Activated CD8-positive, alpha-beta T cell treated with anti-CD3 and anti-CD28 coated beads for 36 hours (primary cell): ENCODE measurements at regions of chr10 and their contacts with region 1.

Region 1: DNA sequence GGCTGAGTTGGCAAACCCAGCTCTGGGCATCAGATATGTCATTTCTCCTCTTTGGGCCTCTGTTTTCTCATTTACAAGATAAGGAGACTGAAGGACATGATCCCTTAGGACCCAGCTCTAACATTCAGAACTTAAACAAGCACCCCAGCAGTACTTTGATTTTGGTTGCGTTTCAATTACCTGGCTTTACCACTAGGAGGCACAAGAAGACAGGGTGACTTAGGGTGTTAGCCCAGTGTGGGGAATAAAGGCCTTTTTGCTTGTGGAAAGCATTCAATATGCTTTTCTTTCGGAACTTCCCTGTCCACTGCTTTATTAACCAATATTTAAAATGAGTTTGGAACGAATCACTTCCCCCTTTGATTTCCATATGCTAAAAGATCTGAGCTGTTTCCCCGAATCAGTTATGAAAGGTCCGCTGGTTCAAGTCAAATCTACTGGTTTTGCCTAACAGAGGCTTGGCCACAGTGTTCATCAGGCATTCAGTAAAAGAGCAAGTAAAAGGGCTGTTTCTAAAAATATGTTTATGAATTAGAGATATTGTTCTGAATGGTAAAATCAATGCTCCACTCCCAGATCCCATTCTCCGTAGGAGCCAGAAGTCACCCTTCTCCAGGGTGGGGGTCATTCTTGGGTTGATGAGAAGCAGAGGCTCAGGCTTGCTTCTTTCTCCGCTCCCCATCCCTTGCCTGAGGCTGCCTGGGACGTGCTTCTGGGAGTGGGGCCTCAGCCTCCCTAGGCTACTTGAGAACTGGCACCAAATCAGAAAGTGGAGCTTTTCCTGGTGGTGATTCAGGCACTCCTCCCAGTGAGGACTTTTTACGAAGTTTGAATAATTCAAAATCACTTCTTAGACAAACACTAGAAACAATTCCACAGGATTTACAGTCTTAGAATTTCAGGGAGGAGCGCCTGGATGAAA is 105.5 kb downstream of the MYOF start:
- DNase-seq: peak; percentile 39
- ATAC-seq: peak; percentile 48
- H3K4me3 Mint-ChIP-seq: no peak overlapping the region
- H3K27ac Mint-ChIP-seq: peak overlapping the region; percentile 40
- H3K4me1 Mint-ChIP-seq: peaks cover 35% of the 10 kb centered on the region
- H3K27me3 Mint-ChIP-seq: peaks cover 4% of the 10 kb centered on the region
- CTCF ChIP-seq: peak; percentile 90

Region 2: DNA sequence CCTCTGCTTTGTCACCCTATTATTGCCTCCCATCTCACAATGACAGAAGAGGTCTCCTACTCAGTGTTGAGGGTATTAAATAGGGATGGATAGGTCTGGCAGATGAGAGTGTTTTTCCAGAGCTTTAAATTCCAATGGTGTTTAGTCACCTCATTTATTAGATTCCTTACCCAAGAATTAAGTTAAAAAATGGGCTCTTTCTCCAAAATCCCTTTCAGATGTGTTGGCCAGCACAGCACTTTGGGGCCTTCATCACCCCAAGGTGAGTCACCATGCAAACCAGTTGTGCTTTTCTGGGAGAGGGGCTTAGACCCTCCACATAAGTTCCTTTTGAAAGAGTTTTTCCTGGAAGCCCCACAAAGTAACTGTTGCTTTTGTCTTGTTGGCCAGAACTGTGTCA is 224.5 kb before region 1 on chr10:
- CTCF ChIA-PET with region 1: no interaction called
- POLR2A ChIA-PET with region 1: no interaction called
- intact Hi-C with region 1: no loop called
- DNase-seq: no peak
- ATAC-seq: no peak
- H3K4me3 Mint-ChIP-seq: no peak overlapping the region
- H3K27ac Mint-ChIP-seq: no peak overlapping the region
- H3K4me1 Mint-ChIP-seq: peaks cover 14% of the 10 kb centered on the region
- H3K27me3 Mint-ChIP-seq: peaks cover 14% of the 10 kb centered on the region
- CTCF ChIP-seq: no peak

Region 3: DNA sequence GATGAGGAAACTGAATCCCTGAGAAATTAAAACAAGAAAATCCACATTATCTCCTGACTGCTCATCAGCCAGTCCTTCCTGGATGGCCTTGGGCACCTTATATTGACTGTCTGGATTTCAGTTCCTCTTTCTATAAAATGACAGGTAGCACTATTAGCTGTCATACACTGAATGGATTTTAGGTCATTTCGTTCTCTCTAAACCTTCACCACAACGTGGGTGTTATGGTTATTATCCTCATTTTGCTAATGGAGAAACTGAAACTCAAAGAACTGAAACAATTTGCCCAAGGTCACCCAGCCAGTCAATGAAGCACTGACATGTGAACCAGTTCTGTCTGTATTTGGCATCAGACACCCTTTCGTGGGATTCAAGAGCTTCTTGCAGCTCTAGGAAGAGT is 109.1 kb before region 1 on chr10:
- CTCF ChIA-PET with region 1: no interaction called
- POLR2A ChIA-PET with region 1: no interaction called
- intact Hi-C with region 1: no loop called
- DNase-seq: no peak
- ATAC-seq: no peak
- H3K4me3 Mint-ChIP-seq: no peak overlapping the region
- H3K27ac Mint-ChIP-seq: no peak overlapping the region
- H3K4me1 Mint-ChIP-seq: no peaks in the 10 kb centered on the region
- H3K27me3 Mint-ChIP-seq: no peaks in the 10 kb centered on the region
- CTCF ChIP-seq: no peak

Region 4: GRCh38 chr10:93299606-93300287 is 76.9 kb before region 1 on chr10:
- CTCF ChIA-PET with region 1: no interaction called
- POLR2A ChIA-PET with region 1: no interaction called
- intact Hi-C with region 1: no loop called
- DNase-seq: no peak
- ATAC-seq: no peak
- H3K4me3 Mint-ChIP-seq: no peak overlapping the region
- H3K27ac Mint-ChIP-seq: no peak overlapping the region
- H3K4me1 Mint-ChIP-seq: no peaks in the 10 kb centered on the region
- H3K27me3 Mint-ChIP-seq: no peaks in the 10 kb centered on the region
- CTCF ChIP-seq: no peak

Region 5: DNA sequence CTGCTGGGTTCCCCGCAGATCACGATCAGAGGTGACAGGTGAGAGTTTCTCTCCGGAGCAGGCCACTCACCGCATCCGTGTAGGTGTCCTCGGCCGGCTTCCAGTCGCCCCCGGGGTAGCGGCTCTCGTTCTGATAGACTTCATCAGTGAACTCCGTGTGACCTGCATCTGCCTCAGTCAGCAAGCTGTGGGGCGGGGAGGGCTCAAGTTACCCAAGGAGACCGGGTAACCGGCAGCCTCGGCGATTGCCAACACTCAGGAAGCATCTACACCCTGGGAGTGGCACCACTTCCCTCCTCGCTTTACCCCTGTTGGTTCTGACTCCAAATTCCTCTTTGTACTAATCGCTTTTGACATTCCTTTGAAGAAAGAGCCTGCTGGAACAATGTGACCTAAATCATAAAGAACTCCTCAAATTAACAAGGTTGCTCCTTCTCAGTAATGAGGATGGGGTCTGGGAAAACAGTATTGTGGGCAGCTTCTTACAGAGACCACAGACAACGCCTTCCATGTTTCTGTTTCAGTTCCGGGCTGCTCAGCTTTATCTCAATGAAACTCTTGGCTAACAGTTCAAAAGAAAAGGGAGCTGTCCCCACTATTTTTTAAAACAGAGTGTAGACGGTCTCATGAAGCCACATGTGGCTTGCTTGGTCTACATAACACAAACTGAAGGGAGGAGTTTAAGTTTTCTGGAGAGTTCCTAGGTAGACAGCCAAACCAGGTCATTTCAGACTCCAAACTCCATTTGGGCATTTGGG is 12.6 kb before region 1 on chr10:
- CTCF ChIA-PET with region 1: interaction called, 30 read pairs
- POLR2A ChIA-PET with region 1: no interaction called
- intact Hi-C with region 1: no loop called
- DNase-seq: no peak
- ATAC-seq: no peak
- H3K4me3 Mint-ChIP-seq: no peak overlapping the region
- H3K27ac Mint-ChIP-seq: no peak overlapping the region
- H3K4me1 Mint-ChIP-seq: no peaks in the 10 kb centered on the region
- H3K27me3 Mint-ChIP-seq: peaks cover 4% of the 10 kb centered on the region
- CTCF ChIP-seq: no peak

Region 6: DNA sequence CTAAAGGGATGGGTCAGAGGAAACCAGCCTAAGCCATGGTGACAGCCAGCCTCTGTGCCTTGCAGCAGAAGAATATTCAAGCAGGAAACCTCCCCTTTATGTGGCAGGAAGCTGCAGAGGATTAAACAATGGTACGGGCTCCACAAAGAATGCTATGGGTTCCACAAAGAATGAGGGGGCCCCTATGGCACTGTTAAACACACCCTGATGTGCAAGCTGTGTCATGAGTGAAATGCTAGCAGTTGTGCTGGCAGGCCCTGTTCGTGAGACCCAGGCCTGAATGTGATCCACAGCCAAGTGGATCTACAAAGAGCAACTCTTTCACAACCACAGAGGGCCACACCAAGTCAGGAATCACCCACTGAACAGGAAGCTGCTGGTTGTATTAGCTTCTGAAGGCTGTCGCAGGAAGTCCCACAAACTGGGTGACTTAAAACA is 36.6 kb after region 1 on chr10:
- CTCF ChIA-PET with region 1: interaction called, 16 read pairs
- POLR2A ChIA-PET with region 1: interaction called, 3 read pairs
- intact Hi-C with region 1: no loop called
- DNase-seq: peak; percentile 39
- ATAC-seq: peak; percentile 71
- H3K4me3 Mint-ChIP-seq: no peak overlapping the region
- H3K27ac Mint-ChIP-seq: peak overlapping the region; percentile 71
- H3K4me1 Mint-ChIP-seq: peaks cover 50% of the 10 kb centered on the region
- H3K27me3 Mint-ChIP-seq: no peaks in the 10 kb centered on the region
- CTCF ChIP-seq: no peak

Region 7: DNA sequence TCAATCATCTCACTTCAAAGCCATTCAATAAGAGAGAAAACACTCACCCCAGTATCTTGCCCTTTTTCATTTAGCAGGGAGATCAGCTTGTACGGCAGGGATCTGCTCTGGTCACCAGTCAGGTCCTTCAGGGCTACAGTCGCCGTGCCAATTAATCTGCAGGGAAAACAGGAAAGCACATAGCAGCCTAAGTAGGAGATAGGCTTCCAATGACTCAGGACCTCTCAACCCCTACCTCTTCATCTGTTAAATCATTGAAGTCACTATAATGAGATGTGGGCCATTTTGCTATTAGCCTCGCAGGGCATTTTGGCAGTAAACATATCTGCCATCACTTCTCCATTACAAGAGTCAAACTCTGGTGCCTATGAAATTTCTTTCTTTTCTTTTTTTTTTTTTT is 54.7 kb after region 1 on chr10:
- CTCF ChIA-PET with region 1: interaction called, 12 read pairs
- POLR2A ChIA-PET with region 1: no interaction called
- intact Hi-C with region 1: no loop called
- DNase-seq: no peak
- ATAC-seq: no peak
- H3K4me3 Mint-ChIP-seq: no peak overlapping the region
- H3K27ac Mint-ChIP-seq: no peak overlapping the region
- H3K4me1 Mint-ChIP-seq: peaks cover 4% of the 10 kb centered on the region
- H3K27me3 Mint-ChIP-seq: no peaks in the 10 kb centered on the region
- CTCF ChIP-seq: no peak

Region 8: DNA sequence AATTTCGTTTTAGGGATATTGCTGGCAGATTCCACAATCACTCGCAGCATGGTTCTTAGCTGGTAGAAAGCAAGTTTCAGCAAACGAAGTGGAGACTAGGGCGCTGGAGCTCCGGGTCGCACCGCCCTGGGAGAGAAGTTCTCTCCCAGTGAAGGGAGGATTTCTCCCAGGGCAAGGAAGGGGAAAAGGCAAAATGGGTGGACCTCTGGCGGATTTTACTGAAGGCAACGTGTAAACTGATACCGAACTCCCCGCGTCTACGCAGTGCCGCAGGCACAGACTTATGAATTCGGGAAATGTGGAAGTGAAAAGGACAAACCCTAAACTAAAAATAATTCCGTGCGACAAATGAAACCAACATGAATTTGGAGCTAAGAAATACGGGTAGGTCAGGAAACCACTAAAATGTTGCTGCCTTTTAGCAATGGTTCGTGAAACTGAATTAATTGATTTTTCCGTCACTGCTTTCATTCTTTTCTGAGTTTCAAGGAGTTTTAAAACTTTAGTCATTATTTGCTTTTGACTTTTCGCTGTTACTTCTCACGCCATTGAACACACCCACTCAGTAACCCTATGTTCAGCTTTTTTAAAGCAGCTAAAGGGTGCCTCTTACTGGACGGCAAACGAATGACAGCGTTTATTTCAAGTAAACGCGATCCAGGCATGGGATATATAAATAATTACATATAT is 105.7 kb after region 1 on chr10 and contains the start of gene MYOF:
- CTCF ChIA-PET with region 1: interaction called, 595 read pairs
- POLR2A ChIA-PET with region 1: interaction called, 23 read pairs
- intact Hi-C with region 1: loop called (anchors 1 kb)
- DNase-seq: peak; percentile 71
- ATAC-seq: peak; percentile 90
- H3K4me3 Mint-ChIP-seq: peak within 1 kb of the TSS; percentile 75
- H3K27ac Mint-ChIP-seq: peak within 1 kb of the TSS; percentile 87
- H3K4me1 Mint-ChIP-seq: peaks cover 18% of the 10 kb centered on the region
- H3K27me3 Mint-ChIP-seq: peaks cover 18% of the 10 kb centered on the region
- CTCF ChIP-seq: peak; percentile 70
- total RNA-seq, gene MYOF: 4.9 to 5.4 TPM

Region 9: DNA sequence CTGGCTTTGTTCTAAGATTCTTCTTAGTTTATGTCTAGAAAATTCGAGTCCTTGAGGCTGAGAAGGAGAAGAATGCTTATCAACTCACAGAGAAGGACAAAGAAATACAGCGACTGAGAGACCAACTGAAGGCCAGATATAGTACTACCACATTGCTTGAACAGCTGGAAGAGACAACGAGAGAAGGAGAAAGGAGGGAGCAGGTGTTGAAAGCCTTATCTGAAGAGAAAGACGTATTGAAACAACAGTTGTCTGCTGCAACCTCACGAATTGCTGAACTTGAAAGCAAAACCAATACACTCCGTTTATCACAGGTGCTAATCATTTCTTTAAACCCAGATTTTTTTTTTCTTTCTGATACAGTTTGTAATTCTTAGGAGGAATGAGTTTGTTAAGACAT is 126.4 kb after region 1 on chr10:
- CTCF ChIA-PET with region 1: interaction called, 133 read pairs
- POLR2A ChIA-PET with region 1: no interaction called
- intact Hi-C with region 1: no loop called
- DNase-seq: no peak
- ATAC-seq: no peak
- H3K4me3 Mint-ChIP-seq: no peak overlapping the region
- H3K27ac Mint-ChIP-seq: no peak overlapping the region
- H3K4me1 Mint-ChIP-seq: peaks cover 15% of the 10 kb centered on the region
- H3K27me3 Mint-ChIP-seq: no peaks in the 10 kb centered on the region
- CTCF ChIP-seq: no peak

Region 10: DNA sequence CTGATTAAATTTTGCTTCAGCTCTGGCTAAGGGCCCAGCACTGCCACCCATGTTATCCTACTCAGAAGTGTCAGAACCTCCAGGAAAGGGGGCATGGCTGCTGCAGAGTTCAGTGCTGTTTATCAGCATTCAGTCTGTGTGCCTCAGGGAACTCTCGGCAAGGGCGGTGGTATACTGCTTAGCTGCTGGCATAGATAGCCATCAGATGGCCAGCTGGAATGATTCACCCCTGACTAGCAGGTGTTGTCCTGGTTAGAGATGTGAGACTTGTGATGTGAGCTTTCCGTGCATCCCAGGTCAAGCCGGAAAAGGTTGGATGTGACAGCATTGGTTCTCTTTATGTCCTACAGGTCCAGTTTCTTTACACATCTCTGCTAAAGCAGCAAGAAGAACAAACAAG is 141.9 kb after region 1 on chr10:
- CTCF ChIA-PET with region 1: interaction called, 133 read pairs
- POLR2A ChIA-PET with region 1: interaction called, 3 read pairs
- intact Hi-C with region 1: no loop called
- DNase-seq: no peak
- ATAC-seq: no peak
- H3K4me3 Mint-ChIP-seq: no peak overlapping the region
- H3K27ac Mint-ChIP-seq: no peak overlapping the region
- H3K4me1 Mint-ChIP-seq: no peaks in the 10 kb centered on the region
- H3K27me3 Mint-ChIP-seq: no peaks in the 10 kb centered on the region
- CTCF ChIP-seq: no peak